ENCODE measurements at regions of chr11 and their contacts with region 1.

Region 1: GRCh38 chr11:59135648-59136461 is 6.8 kb upstream of the FAM111A start:
- DNase-seq: peak; percentile 88 to 92
- ATAC-seq: peak; percentile 99 to 100 (median 100)
- H3K4me3 ChIP-seq: no peak overlapping the region
- H3K4me3 Mint-ChIP-seq: peak overlapping the region; percentile 38
- H3K27ac ChIP-seq: no peak overlapping the region
- H3K27ac Mint-ChIP-seq: peak overlapping the region; percentile 14 to 64
- H3K4me1 ChIP-seq: peaks cover 8% of the 10 kb centered on the region
- H3K4me1 Mint-ChIP-seq: peaks cover 8 to 11% of the 10 kb centered on the region in 2 donors
- H3K27me3 ChIP-seq: no peaks in the 10 kb centered on the region
- H3K27me3 Mint-ChIP-seq: no peaks in the 10 kb centered on the region
- CTCF ChIP-seq: peak; percentile 97

Region 2: GRCh38 chr11:58654079-58654907 is 481.6 kb before region 1 on chr11:
- intact Hi-C with region 1: loop called (anchors 1 kb)
- DNase-seq: peak; percentile 64 to 87
- ATAC-seq: peak; percentile 91 to 100 (median 99)
- H3K4me3 ChIP-seq: no peak overlapping the region
- H3K4me3 Mint-ChIP-seq: no peak overlapping the region
- H3K27ac ChIP-seq: no peak overlapping the region
- H3K27ac Mint-ChIP-seq: no peak overlapping the region
- H3K4me1 ChIP-seq: no peaks in the 10 kb centered on the region
- H3K4me1 Mint-ChIP-seq: peaks cover 0 to 5% of the 10 kb centered on the region in 2 donors
- H3K27me3 ChIP-seq: no peaks in the 10 kb centered on the region
- H3K27me3 Mint-ChIP-seq: peaks cover 0 to 6% of the 10 kb centered on the region in 2 donors
- CTCF ChIP-seq: peak; percentile 86

Region 3: GRCh38 chr11:58832056-58832645 is 303.7 kb before region 1 on chr11:
- intact Hi-C with region 1: no loop called
- DNase-seq: no peak
- ATAC-seq: no peak
- H3K4me3 ChIP-seq: no peak overlapping the region
- H3K4me3 Mint-ChIP-seq: no peak overlapping the region
- H3K27ac ChIP-seq: no peak overlapping the region
- H3K27ac Mint-ChIP-seq: no peak overlapping the region
- H3K4me1 ChIP-seq: no peaks in the 10 kb centered on the region
- H3K4me1 Mint-ChIP-seq: no peaks in the 10 kb centered on the region
- H3K27me3 ChIP-seq: no peaks in the 10 kb centered on the region
- H3K27me3 Mint-ChIP-seq: peaks cover 0 to 5% of the 10 kb centered on the region in 2 donors
- CTCF ChIP-seq: no peak

Region 4: GRCh38 chr11:58845366-58845765 is 290.5 kb before region 1 on chr11:
- intact Hi-C with region 1: loop called (anchors 2 kb)
- DNase-seq: no peak
- ATAC-seq: no peak
- H3K4me3 ChIP-seq: no peak overlapping the region
- H3K4me3 Mint-ChIP-seq: no peak overlapping the region
- H3K27ac ChIP-seq: no peak overlapping the region
- H3K27ac Mint-ChIP-seq: no peak overlapping the region
- H3K4me1 ChIP-seq: no peaks in the 10 kb centered on the region
- H3K4me1 Mint-ChIP-seq: no peaks in the 10 kb centered on the region
- H3K27me3 ChIP-seq: no peaks in the 10 kb centered on the region
- H3K27me3 Mint-ChIP-seq: peaks cover 8 to 13% of the 10 kb centered on the region in 2 donors
- CTCF ChIP-seq: no peak

Region 5: DNA sequence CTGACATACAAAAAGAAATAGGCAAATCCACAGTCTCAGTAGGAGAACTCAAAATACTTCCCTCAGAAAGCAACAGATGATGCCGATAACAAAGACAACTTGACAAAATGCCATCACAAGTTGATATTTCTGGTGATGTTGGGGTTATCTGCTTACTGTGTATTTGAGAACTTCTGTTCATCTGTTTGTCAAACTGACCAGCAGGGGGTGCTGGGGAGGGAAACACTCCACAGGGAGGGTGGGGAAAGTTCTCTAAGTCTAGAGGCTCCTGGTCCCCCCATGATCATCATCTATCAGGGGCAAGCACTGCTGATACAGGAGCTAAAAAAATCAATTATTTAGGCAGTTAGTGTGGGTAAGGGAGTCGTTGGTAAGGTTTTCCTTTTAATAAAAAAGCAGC is 177.4 kb before region 1 on chr11:
- intact Hi-C with region 1: loop called (anchors 5 kb)
- DNase-seq: peak in 1 of 2 donors; percentile 61
- ATAC-seq: no peak
- H3K4me3 ChIP-seq: no peak overlapping the region
- H3K4me3 Mint-ChIP-seq: no peak overlapping the region
- H3K27ac ChIP-seq: no peak overlapping the region
- H3K27ac Mint-ChIP-seq: no peak overlapping the region
- H3K4me1 ChIP-seq: no peaks in the 10 kb centered on the region
- H3K4me1 Mint-ChIP-seq: no peaks in the 10 kb centered on the region
- H3K27me3 ChIP-seq: no peaks in the 10 kb centered on the region
- H3K27me3 Mint-ChIP-seq: peaks cover 3 to 7% of the 10 kb centered on the region in 2 donors
- CTCF ChIP-seq: no peak

Region 6: DNA sequence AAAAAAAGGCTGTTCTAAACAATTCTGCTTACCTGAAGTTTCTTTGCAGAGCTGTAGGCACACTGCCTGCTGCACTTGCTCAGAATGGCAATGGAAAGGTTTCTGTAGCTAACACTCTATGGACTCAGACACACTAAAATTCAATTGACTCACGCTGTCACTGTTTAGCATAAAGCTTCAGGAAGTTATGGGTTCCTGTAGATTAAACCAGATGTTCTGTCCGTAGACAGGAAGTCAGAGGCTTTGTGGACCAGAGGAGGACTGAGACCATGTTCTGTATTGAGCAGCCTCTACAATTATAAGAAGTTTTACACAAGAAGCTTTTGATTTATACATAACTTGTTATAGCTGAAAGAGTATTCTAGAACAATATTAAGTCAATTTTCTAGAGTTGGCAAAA is 126.2 kb before region 1 on chr11:
- intact Hi-C with region 1: no loop called
- DNase-seq: no peak
- ATAC-seq: peak in 1 of 3 donors; percentile 54
- H3K4me3 ChIP-seq: no peak overlapping the region
- H3K4me3 Mint-ChIP-seq: no peak overlapping the region
- H3K27ac ChIP-seq: no peak overlapping the region
- H3K27ac Mint-ChIP-seq: no peak overlapping the region
- H3K4me1 ChIP-seq: no peaks in the 10 kb centered on the region
- H3K4me1 Mint-ChIP-seq: no peaks in the 10 kb centered on the region
- H3K27me3 ChIP-seq: no peaks in the 10 kb centered on the region
- H3K27me3 Mint-ChIP-seq: peaks cover 0 to 6% of the 10 kb centered on the region in 2 donors
- CTCF ChIP-seq: no peak

Region 7: GRCh38 chr11:59053387-59053786 is 82.5 kb before region 1 on chr11:
- intact Hi-C with region 1: loop called (anchors 1 kb)
- DNase-seq: peak; percentile 67 to 88
- ATAC-seq: peak; percentile 67 to 79 (median 78)
- H3K4me3 ChIP-seq: no peak overlapping the region
- H3K4me3 Mint-ChIP-seq: no peak overlapping the region
- H3K27ac ChIP-seq: no peak overlapping the region
- H3K27ac Mint-ChIP-seq: no peak overlapping the region
- H3K4me1 ChIP-seq: peaks cover 6% of the 10 kb centered on the region
- H3K4me1 Mint-ChIP-seq: peaks cover 6% of the 10 kb centered on the region in 2 donors
- H3K27me3 ChIP-seq: no peaks in the 10 kb centered on the region
- H3K27me3 Mint-ChIP-seq: peaks cover 8 to 50% of the 10 kb centered on the region in 2 donors
- CTCF ChIP-seq: peak; percentile 73

Region 8: DNA sequence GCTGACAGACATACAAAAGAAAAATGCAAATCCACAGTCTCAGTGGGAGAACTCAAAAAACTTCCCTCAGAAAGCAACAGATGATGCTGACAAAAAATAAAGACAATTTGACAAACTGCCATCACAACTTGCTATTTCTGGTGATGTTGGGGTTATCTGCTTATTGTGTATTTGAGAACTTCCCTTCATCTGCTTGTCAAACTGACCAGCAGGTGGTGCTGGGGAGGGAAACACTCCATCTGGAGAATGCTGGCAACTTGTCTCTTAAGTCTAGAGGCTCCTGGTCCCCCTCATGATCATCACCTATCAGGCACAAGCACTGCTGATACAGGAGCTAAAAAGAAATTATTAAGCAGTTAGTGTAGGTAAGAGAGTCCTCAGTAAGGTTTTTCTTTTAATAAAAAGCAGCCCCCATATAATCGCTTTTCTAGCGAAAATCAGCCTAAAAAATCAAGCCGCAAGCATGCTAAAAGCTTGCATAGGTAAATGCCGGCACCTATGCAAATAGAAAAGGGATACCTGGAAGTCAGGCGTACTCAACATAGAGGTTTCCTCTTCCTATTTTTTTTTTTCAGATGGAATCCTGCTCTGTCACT is 38.6 kb before region 1 on chr11:
- intact Hi-C with region 1: loop called (anchors 1 kb)
- DNase-seq: peak; percentile 49 to 86
- ATAC-seq: peak; percentile 56 to 82 (median 80)
- H3K4me3 ChIP-seq: no peak overlapping the region
- H3K4me3 Mint-ChIP-seq: no peak overlapping the region
- H3K27ac ChIP-seq: no peak overlapping the region
- H3K27ac Mint-ChIP-seq: no peak overlapping the region
- H3K4me1 ChIP-seq: peaks cover 8% of the 10 kb centered on the region
- H3K4me1 Mint-ChIP-seq: peaks cover 4 to 8% of the 10 kb centered on the region in 2 donors
- H3K27me3 ChIP-seq: peaks cover 2% of the 10 kb centered on the region
- H3K27me3 Mint-ChIP-seq: peaks cover 17 to 39% of the 10 kb centered on the region in 2 donors
- CTCF ChIP-seq: peak; percentile 66